Sigmoid colon (tissue), 7 donors: ENCODE measurements at regions of chr5 and their contacts with region 1.

Region 1: GRCh38 chr5:67209142-67209771 is 12.7 kb upstream of the CD180 start:
- DNase-seq: peak; percentile 78
- H3K4me3 ChIP-seq: no peak overlapping the region
- H3K27ac ChIP-seq: no peak overlapping the region
- H3K4me1 ChIP-seq: peaks cover 0 to 8% (median 3%) of the 10 kb centered on the region in 4 donors
- H3K27me3 ChIP-seq: no peaks in the 10 kb centered on the region
- CTCF ChIP-seq: peak; percentile 74 to 76 (median 75)
- EP300 ChIP-seq: no peak
- POLR2A ChIP-seq: no peak

Region 2: GRCh38 chr5:66306105-66306843 is 903.0 kb before region 1 on chr5:
- intact Hi-C with region 1: loop called (anchors 5 kb)
- DNase-seq: peak; percentile 72
- H3K4me3 ChIP-seq: no peak overlapping the region
- H3K27ac ChIP-seq: no peak overlapping the region
- H3K4me1 ChIP-seq: peaks cover 0 to 12% (median 0%) of the 10 kb centered on the region in 4 donors
- H3K27me3 ChIP-seq: no peaks in the 10 kb centered on the region
- CTCF ChIP-seq: peak in 3 of 4 experiments; percentile 65 to 73 (median 70)
- EP300 ChIP-seq: no peak
- POLR2A ChIP-seq: no peak

Region 3: GRCh38 chr5:66814146-66814991 is 394.9 kb before region 1 on chr5:
- intact Hi-C with region 1: loop called (anchors 5 kb)
- DNase-seq: no peak
- H3K4me3 ChIP-seq: no peak overlapping the region
- H3K27ac ChIP-seq: no peak overlapping the region
- H3K4me1 ChIP-seq: peaks cover 0 to 2% (median 0%) of the 10 kb centered on the region in 4 donors
- H3K27me3 ChIP-seq: no peaks in the 10 kb centered on the region
- CTCF ChIP-seq: peak in 3 of 4 experiments; percentile 37 to 72 (median 38)
- EP300 ChIP-seq: no peak
- POLR2A ChIP-seq: no peak

Region 4: GRCh38 chr5:67165526-67166459 is 43.5 kb before region 1 on chr5:
- intact Hi-C with region 1: loop called (anchors 1 kb)
- DNase-seq: peak; percentile 92
- H3K4me3 ChIP-seq: peak overlapping the region in 3 of 4 donors; percentile 23 to 38 (median 32)
- H3K27ac ChIP-seq: peak overlapping the region; percentile 59 to 77 (median 76)
- H3K4me1 ChIP-seq: peaks cover 0 to 20% (median 19%) of the 10 kb centered on the region in 4 donors
- H3K27me3 ChIP-seq: no peaks in the 10 kb centered on the region
- CTCF ChIP-seq: peak; percentile 50 to 84 (median 78)
- EP300 ChIP-seq: no peak
- POLR2A ChIP-seq: no peak